Mammary epithelial cell (primary cell): ENCODE measurements at regions of chr12 and their contacts with region 1.

Region 1: DNA sequence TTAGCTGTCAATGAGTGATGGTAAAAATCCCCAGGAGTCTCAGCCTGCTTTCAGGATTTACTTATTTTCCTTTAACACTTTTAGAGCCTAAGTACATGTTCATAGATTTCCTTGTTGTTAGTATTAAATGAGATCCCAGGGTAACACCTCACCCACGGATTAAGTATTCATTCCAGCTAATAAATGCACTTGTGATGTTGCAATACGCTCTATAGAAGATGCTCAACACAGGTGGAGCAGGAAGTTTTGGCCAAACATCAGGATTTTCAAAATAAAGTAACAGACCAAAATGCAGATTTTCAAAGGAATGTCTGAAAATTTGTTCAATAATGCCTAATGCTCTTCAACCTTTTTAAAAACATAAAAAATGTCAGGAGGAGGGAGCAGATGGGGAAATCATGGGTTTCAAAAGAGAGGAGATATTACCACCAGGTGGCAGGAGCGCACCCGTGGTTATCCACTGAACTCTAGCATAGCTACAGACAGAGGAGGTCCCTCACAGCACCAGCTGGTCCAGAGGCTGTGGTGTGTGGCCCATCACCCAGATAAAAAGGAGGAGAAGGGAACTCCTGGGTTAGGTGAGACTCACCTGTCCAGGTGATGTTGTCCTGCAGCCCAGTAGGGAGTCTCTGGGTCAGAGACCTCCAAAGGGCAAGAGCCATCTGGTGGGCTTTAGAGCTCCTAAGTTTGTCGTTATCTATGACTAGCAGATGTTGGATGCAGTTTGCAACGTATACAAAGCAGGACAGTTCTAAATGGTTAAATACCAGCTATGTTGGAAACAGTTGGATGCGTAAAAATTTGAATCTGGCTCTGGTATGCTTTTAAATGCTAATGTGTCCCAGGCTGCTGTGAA is 1158.4 kb upstream of the TMEM132C start:
- DNase-seq: peak; percentile 60
- H3K4me3 ChIP-seq: no peak overlapping the region
- H3K27ac ChIP-seq: peak overlapping the region; percentile 21
- H3K4me1 ChIP-seq: peaks cover 17% of the 10 kb centered on the region
- H3K27me3 ChIP-seq: no peaks in the 10 kb centered on the region
- CTCF ChIP-seq: peak; percentile 61 to 77

Region 2: DNA sequence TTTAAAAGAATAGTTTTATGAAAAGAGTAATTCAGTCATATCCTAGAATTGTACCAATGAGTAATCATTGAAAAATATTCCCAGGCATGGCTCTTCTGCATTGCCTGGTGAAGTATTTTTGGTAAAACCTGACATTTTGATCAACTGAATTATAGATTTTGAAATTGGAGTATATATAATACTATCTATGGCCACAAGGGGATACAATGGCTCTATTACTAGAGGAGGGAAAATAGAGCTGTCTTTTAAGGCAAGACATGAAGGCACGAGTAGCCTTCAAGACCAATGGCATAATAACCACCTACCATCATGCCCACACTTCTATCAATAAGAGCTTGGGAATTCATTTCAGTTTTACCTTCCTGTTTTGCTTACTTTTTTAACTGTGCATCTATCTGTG is 83.0 kb before region 1 on chr12:
- CTCF ChIA-PET with region 1: no interaction called
- dilution Hi-C with region 1: no loop called
- in situ Hi-C with region 1: no loop called
- intact Hi-C with region 1: loop called (anchors 1 kb)
- DNase-seq: no peak
- H3K4me3 ChIP-seq: no peak overlapping the region
- H3K27ac ChIP-seq: no peak overlapping the region
- H3K4me1 ChIP-seq: no peaks in the 10 kb centered on the region
- H3K27me3 ChIP-seq: no peaks in the 10 kb centered on the region
- CTCF ChIP-seq: peak; percentile 50 to 58

Region 3: GRCh38 chr12:127230843-127231260 is 122.3 kb after region 1 on chr12:
- CTCF ChIA-PET with region 1: no interaction called
- dilution Hi-C with region 1: no loop called
- in situ Hi-C with region 1: no loop called
- intact Hi-C with region 1: loop called (anchors 5 kb)
- DNase-seq: peak; percentile 99
- H3K4me3 ChIP-seq: no peak overlapping the region
- H3K27ac ChIP-seq: peak overlapping the region; percentile 88
- H3K4me1 ChIP-seq: peaks cover 35% of the 10 kb centered on the region
- H3K27me3 ChIP-seq: no peaks in the 10 kb centered on the region
- CTCF ChIP-seq: no peak

Region 4: GRCh38 chr12:127280393-127281275 is 172.0 kb after region 1 on chr12:
- CTCF ChIA-PET with region 1: interaction called, 6 read pairs
- dilution Hi-C with region 1: no loop called
- in situ Hi-C with region 1: no loop called
- intact Hi-C with region 1: loop called (anchors 1 kb)
- DNase-seq: peak; percentile 39
- H3K4me3 ChIP-seq: no peak overlapping the region
- H3K27ac ChIP-seq: no peak overlapping the region
- H3K4me1 ChIP-seq: peaks cover 17% of the 10 kb centered on the region
- H3K27me3 ChIP-seq: no peaks in the 10 kb centered on the region
- CTCF ChIP-seq: peak; percentile 91 to 92

Region 5: DNA sequence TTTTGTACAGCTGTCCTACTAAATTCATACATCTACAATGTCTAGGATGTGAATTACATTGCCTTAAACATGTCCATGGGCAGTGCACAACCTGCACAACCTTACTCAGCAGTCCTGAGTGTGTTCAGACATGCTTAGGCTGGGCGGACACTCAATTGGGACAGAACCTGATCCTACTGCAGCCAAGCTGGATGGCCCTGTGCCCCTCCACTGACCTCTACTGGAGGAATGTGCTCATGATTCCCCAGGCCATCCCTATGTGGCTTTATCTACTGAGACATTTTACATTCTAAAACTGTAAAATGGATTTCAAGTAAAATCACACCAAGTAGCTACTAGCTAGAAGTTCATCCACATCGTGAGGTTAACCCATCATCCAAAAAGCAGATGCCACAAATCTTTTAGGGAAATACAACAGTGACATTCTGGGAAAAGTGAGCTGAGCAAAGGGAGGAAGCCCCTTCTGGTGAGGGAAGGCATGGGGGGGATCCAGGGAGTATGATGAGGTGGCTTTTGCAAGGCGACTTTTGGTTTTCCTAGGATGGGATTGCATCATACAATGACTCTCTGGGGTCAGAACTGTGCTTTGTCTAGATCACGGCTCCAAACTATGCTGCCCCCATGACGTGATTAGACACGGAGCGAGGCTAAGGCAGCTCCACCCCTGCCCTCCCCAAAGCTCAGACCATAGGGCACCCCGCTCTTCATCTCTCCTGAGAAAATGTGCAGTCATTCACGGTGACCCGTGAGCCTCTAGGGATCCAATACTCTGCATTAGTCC is 246.7 kb after region 1 on chr12:
- CTCF ChIA-PET with region 1: interaction called, 7 read pairs
- dilution Hi-C with region 1: no loop called
- in situ Hi-C with region 1: no loop called
- intact Hi-C with region 1: loop called (anchors 1 kb)
- DNase-seq: peak; percentile 17
- H3K4me3 ChIP-seq: no peak overlapping the region
- H3K27ac ChIP-seq: no peak overlapping the region
- H3K4me1 ChIP-seq: no peaks in the 10 kb centered on the region
- H3K27me3 ChIP-seq: no peaks in the 10 kb centered on the region
- CTCF ChIP-seq: peak; percentile 87 to 95

Region 6: DNA sequence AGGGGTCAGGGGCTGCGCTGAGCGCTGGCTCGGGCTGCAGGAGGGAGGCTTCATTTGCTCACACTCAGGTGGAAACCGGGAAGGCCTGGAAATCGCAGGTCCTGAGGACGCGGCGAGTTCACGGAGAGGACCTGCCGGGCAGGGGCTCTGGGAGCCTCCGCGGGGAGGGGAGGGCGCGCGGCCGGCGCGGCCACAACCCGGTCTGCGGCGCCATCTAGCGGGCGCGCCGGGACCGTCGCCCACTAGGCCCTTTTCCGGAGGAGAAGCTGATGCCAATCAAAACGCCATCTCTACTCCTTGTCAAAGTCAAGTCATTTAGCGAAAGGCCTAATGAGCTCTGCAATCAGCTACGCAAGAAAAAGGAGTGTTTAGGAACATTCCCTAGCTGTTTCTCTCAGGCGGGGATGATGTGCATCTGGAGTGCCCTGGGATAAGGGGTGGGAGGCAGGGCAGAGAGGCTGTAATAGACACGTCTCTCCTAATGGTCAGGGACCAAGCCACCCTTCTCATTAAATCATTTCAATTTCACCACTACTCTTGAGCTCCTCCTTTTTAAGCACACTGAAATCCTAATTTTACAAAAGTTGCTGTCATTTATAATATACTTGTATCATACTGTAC is 272.6 kb after region 1 on chr12:
- CTCF ChIA-PET with region 1: interaction called, 3 read pairs
- dilution Hi-C with region 1: no loop called
- in situ Hi-C with region 1: no loop called
- intact Hi-C with region 1: loop called (anchors 1 kb)
- DNase-seq: peak; percentile 21
- H3K4me3 ChIP-seq: peak overlapping the region; percentile 37 to 43 (median 42)
- H3K27ac ChIP-seq: no peak overlapping the region
- H3K4me1 ChIP-seq: peaks cover 3% of the 10 kb centered on the region
- H3K27me3 ChIP-seq: no peaks in the 10 kb centered on the region
- CTCF ChIP-seq: peak; percentile 79 to 89